Cardiac septum (tissue), 1 donor: ENCODE measurements at regions of chr12 and their contacts with region 1.

Region 1: DNA sequence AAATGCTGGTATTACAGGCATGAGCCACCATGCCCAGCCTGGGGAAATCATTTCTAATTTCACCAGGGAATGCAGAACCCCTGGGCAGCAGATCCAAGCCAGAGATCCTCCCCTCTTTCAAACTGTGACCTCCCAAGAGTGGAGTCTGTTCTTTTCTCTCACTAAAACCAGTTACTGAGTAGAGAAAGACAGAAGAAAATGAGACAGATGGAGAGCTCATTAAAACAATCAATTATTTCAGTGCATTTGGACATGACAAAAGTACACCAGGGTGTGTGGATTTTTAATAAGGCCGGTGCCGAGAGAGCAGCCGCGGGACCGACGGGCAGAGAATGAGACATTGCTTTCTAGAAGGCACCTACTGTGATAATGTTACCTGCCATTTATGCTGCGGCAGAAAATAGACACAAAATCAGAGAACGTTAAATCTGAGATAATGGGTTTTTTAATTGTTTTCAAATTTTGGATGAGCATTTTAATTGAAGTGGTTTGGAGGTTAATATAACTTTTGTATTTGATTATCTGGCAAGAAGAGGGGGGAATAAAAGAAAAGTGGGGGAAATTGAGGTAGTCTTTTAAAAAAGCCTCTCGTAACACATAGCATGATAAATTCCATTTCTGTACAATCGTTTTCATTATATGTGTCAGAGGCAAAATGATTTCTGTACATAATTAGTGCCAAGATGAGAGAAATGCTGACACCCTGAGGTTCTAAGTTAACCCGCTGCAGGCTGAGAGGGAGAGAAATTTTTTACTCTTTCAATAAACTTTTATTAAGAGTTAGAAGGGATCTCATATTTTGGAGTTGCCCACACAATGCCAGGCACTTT is 70.8 kb downstream of the HSPB8 start:
- DNase-seq: no peak

Region 2: GRCh38 chr12:119156401-119157044 is 93.0 kb before region 1 on chr12:
- intact Hi-C with region 1: loop called (anchors 1 kb)
- DNase-seq: no peak

Region 3: DNA sequence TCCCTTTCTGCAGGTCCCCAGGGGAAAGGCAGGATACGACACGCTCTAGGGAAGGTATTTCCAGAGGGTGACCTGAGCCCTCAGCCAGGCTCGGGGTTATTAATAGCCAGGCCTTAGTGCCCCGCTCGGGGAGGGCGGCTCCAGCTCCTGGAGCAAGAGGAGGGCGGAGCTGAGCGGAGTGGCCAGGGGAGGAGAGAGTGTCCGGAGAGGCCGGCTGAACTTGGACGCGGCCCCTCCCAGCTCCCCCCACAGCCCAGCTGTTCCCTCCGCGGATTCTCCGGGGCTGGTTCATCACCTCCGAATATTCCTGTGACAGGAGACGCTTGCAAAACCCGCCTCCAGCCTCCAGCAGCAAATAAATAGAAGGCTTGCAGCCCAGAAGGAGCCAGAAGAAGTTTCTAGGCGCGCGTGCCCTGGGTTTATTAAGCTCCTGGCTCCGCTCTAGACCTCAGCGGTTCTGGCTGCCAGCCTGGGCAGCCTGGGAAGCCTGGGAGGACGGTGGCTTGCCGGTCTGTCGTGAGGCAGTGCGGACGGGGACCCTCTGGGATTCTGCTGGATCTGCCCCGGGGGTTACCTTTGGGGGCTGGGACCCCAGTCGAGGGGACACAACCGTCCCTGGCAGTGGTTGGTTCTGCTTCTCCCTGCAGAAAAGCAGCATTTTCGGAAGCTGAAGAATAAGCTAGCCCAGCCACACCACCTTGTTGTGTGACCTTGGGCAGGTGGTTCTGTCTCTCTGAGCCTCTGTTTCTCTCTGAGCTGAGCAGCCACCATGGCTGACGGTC is 70.8 kb before region 1 on chr12 and contains the start of gene HSPB8:
- intact Hi-C with region 1: loop called (anchors 2 kb)
- DNase-seq: peak; percentile 95
- total RNA-seq, gene HSPB8: 529 TPM

Region 4: GRCh38 chr12:119208622-119209061 is 40.9 kb before region 1 on chr12:
- intact Hi-C with region 1: loop called (anchors 5 kb)
- DNase-seq: peak; percentile 83

Region 5: DNA sequence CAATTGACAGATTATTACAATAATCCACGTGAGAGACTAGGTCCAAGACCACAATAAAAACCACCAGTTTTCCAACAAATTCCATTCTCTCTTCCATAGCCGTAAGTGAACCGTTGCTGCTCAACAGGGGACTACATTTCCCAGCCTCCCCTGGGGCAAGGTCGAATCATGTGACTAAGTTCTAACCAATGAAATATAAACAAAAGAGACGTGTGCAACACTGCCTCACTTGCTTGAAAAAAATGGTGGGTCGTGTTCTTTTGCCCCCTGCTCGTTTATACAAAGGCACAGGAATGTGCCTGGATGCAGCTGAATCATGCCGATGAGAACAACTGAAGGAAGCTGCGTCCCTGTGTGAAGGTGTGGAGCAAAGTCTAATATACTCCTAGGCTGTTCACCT is 19.7 kb before region 1 on chr12:
- intact Hi-C with region 1: no loop called
- DNase-seq: no peak

Region 6: DNA sequence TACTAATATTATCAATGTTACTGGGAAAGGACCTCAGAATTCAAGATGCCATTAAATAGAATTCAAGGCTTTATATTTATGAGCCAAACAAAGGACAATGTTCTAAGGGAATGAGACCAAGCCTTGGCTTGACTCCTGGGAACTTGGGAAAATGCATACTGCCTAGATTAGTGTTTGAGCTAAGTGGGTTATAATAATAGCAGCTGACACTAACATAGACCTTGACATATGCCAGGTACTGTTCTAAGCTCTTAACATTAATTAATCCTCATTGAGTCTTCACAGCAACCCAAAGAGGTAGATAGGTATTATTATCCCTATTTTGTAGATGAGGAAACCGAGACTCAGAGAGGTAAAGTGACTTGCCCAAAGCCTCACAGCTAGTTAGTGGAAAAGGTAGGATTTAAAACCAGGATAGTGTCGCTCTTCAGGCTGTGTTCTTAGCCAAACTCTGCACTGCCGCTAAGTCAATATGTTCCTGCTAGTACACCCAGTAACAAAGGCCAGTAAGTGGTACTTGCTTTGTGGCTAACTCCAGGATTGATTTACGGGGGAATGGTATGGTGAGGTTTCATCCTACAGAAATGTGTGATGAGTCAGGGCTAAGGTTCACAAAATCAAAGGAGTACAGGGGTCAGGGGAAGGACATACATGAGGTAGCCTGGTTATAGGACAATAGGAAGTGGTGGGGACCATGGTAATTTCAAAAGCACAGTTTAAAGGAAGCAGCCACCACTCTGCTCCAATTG is 382.6 kb after region 1 on chr12:
- intact Hi-C with region 1: no loop called
- DNase-seq: no peak